ENCODE measurements at regions of chr3 and their contacts with region 1.

Region 1: DNA sequence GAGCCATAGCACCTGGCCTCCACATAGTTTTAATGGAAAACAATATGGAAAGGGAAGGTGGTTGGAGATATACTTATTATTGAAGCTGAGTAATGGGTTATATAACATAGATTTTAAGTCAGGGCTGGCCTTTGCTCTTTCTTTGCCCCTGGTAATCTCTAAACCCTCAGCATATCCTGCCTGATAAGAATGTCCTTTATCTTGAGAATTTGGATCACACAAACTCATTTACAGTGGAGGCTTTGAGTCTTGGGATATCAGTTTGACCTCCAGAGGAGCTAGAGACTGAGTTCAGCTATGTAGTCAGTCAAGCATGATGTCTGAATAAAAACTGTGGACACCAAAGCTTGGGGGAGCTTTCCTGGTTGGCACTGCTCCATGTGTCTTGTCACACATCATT is 9.0 kb upstream of the C3orf33 start:
- DNase-seq: no peak
- H3K4me3 ChIP-seq: no peak overlapping the region
- H3K4me3 Mint-ChIP-seq: no peak overlapping the region
- H3K27ac Mint-ChIP-seq: no peak overlapping the region
- H3K4me1 ChIP-seq: peaks cover 11% of the 10 kb centered on the region
- H3K4me1 Mint-ChIP-seq: peaks cover 5% of the 10 kb centered on the region
- H3K27me3 ChIP-seq: no peaks in the 10 kb centered on the region
- H3K27me3 Mint-ChIP-seq: no peaks in the 10 kb centered on the region
- CTCF ChIP-seq: no peak

Region 2: DNA sequence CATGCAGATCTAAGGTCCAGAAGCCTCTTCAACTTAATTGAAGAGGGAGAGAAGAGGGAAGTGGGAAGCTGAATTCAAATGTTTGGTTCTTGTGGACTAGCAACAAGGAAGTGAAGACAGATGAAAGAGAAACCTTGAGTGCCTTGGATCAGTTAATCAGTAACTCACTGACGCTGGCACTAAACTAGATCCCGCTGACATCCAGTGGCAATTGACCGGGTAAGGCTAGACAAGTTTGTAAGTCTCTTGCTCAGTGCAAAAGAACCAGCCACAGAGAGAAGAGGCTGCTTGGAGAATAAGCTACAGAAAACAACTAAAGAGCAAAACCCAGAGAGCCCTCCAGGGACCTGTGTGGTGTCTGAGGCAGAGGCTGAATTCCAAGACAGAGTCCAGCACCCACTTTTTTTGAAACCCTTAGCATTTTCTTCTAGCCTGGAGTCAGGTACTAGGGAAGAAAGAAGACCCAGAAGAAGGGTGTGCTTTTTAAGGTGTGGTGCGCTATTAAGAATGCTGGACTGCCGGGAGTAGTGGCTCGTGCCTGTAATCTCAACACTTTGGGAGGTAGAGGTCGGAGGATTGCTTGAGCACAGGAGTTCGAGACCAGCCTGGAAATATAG is 77.1 kb before region 1 on chr3:
- CTCF ChIA-PET with region 1: no interaction called
- POLR2A ChIA-PET with region 1: no interaction called
- intact Hi-C with region 1: no loop called
- DNase-seq: peak; percentile 79 to 81
- H3K4me3 ChIP-seq: peak overlapping the region; percentile 30
- H3K4me3 Mint-ChIP-seq: peak overlapping the region; percentile 72
- H3K27ac Mint-ChIP-seq: peak overlapping the region; percentile 81
- H3K4me1 ChIP-seq: peaks cover 21% of the 10 kb centered on the region
- H3K4me1 Mint-ChIP-seq: peaks cover 27% of the 10 kb centered on the region
- H3K27me3 ChIP-seq: no peaks in the 10 kb centered on the region
- H3K27me3 Mint-ChIP-seq: no peaks in the 10 kb centered on the region
- CTCF ChIP-seq: no peak

Region 3: GRCh38 chr3:155846119-155846518 is 31.1 kb after region 1 on chr3:
- CTCF ChIA-PET with region 1: no interaction called
- POLR2A ChIA-PET with region 1: no interaction called
- intact Hi-C with region 1: no loop called
- DNase-seq: no peak
- H3K4me3 ChIP-seq: no peak overlapping the region
- H3K4me3 Mint-ChIP-seq: no peak overlapping the region
- H3K27ac Mint-ChIP-seq: no peak overlapping the region
- H3K4me1 ChIP-seq: no peaks in the 10 kb centered on the region
- H3K4me1 Mint-ChIP-seq: no peaks in the 10 kb centered on the region
- H3K27me3 ChIP-seq: no peaks in the 10 kb centered on the region
- H3K27me3 Mint-ChIP-seq: no peaks in the 10 kb centered on the region
- CTCF ChIP-seq: no peak

Region 4: GRCh38 chr3:155934230-155934629 is 119.2 kb after region 1 on chr3:
- CTCF ChIA-PET with region 1: no interaction called
- POLR2A ChIA-PET with region 1: interaction called, 11 read pairs
- intact Hi-C with region 1: no loop called
- DNase-seq: no peak
- H3K4me3 ChIP-seq: no peak overlapping the region
- H3K4me3 Mint-ChIP-seq: no peak overlapping the region
- H3K27ac Mint-ChIP-seq: no peak overlapping the region
- H3K4me1 ChIP-seq: no peaks in the 10 kb centered on the region
- H3K4me1 Mint-ChIP-seq: no peaks in the 10 kb centered on the region
- H3K27me3 ChIP-seq: no peaks in the 10 kb centered on the region
- H3K27me3 Mint-ChIP-seq: no peaks in the 10 kb centered on the region
- CTCF ChIP-seq: no peak

Region 5: GRCh38 chr3:156024904-156025533 is 210.0 kb after region 1 on chr3:
- CTCF ChIA-PET with region 1: no interaction called
- POLR2A ChIA-PET with region 1: no interaction called
- intact Hi-C with region 1: no loop called
- DNase-seq: no peak
- H3K4me3 ChIP-seq: no peak overlapping the region
- H3K4me3 Mint-ChIP-seq: no peak overlapping the region
- H3K27ac Mint-ChIP-seq: no peak overlapping the region
- H3K4me1 ChIP-seq: no peaks in the 10 kb centered on the region
- H3K4me1 Mint-ChIP-seq: no peaks in the 10 kb centered on the region
- H3K27me3 ChIP-seq: no peaks in the 10 kb centered on the region
- H3K27me3 Mint-ChIP-seq: peaks cover 23% of the 10 kb centered on the region
- CTCF ChIP-seq: no peak